ENCODE measurements at regions of chr7 and their contacts with region 1.

Region 1: GRCh38 chr7:36389371-36390198 is at the start of gene ANLN:
- DNase-seq: peak; percentile 96 to 99
- H3K4me3 ChIP-seq: peak within 1 kb of the TSS; percentile 94
- H3K27ac ChIP-seq: peak within 1 kb of the TSS; percentile 81
- H3K4me1 ChIP-seq: peaks cover 70% of the 10 kb centered on the region
- H3K27me3 ChIP-seq: no peaks in the 10 kb centered on the region
- CTCF ChIP-seq: no peak; the same call in 1 of the 2 replicates
- total RNA-seq, gene ANLN: 239 and 262 TPM in 2 replicates

Region 2: GRCh38 chr7:35003679-35004303 is 1385.8 kb before region 1 on chr7:
- CTCF ChIA-PET with region 1: no interaction called
- POLR2A ChIA-PET with region 1: interaction called, 11 read pairs
- intact Hi-C with region 1: no loop called
- DNase-seq: peak; percentile 88 to 99
- H3K4me3 ChIP-seq: peak overlapping the region; percentile 28; the same call in 1 of the 2 replicates
- H3K27ac ChIP-seq: peak overlapping the region; percentile 94
- H3K4me1 ChIP-seq: peaks cover 45% of the 10 kb centered on the region
- H3K27me3 ChIP-seq: no peaks in the 10 kb centered on the region
- CTCF ChIP-seq: no peak

Region 3: GRCh38 chr7:35801392-35802101 is 588.0 kb before region 1 on chr7:
- CTCF ChIA-PET with region 1: no interaction called
- POLR2A ChIA-PET with region 1: interaction called, 3 read pairs
- intact Hi-C with region 1: loop called (anchors 5 kb)
- DNase-seq: peak; percentile 61 to 76
- H3K4me3 ChIP-seq: peak overlapping the region; percentile 69
- H3K27ac ChIP-seq: peak overlapping the region; percentile 92
- H3K4me1 ChIP-seq: peaks cover 31% of the 10 kb centered on the region
- H3K27me3 ChIP-seq: no peaks in the 10 kb centered on the region
- CTCF ChIP-seq: peak; percentile 86

Region 4: DNA sequence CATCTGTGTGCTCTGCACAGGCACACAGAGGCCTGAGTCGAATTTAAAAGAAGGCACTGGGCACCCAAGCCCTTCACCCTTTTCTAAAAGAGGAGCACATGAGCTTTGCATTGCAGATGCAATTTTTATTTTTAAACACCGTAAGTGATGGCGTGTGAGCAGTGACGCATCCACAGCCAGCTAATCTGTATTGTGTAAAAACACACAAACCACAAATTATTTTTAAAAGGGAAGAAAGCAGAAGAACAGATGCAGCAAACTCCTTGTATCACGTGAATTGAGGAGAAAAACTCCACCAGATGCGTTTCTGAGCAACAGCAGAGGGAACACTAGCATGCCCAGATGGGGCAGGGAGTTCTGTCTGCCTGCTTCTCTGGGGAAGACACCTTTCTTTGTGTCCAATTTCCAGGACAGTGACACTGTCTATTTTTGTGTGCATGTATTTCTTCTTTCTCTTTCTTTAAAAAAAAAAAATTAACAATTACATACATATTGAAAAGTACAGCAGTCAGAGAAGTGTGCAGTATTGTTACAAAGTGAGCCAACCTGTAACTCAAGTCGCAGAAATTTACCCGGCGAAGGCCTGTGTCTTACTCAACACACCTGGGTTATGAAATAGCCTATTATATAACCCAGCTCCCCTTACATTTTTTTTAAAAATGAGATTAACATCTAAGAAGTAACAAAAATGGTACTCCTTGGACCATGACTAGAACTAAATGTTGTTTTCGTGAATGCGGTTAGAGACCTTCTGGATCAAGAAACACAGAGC is 197.3 kb before region 1 on chr7:
- CTCF ChIA-PET with region 1: no interaction called
- POLR2A ChIA-PET with region 1: no interaction called
- intact Hi-C with region 1: no loop called
- DNase-seq: no peak
- H3K4me3 ChIP-seq: no peak overlapping the region
- H3K27ac ChIP-seq: no peak overlapping the region
- H3K4me1 ChIP-seq: peaks cover 25% of the 10 kb centered on the region
- H3K27me3 ChIP-seq: no peaks in the 10 kb centered on the region
- CTCF ChIP-seq: no peak

Region 5: GRCh38 chr7:36303202-36304098 is 86.1 kb before region 1 on chr7:
- CTCF ChIA-PET with region 1: no interaction called
- POLR2A ChIA-PET with region 1: no interaction called
- intact Hi-C with region 1: loop called (anchors 1 kb)
- DNase-seq: peak; percentile 94 to 100
- H3K4me3 ChIP-seq: no peak overlapping the region
- H3K27ac ChIP-seq: peak overlapping the region; percentile 60
- H3K4me1 ChIP-seq: peaks cover 29% of the 10 kb centered on the region
- H3K27me3 ChIP-seq: no peaks in the 10 kb centered on the region
- CTCF ChIP-seq: no peak

Region 6: DNA sequence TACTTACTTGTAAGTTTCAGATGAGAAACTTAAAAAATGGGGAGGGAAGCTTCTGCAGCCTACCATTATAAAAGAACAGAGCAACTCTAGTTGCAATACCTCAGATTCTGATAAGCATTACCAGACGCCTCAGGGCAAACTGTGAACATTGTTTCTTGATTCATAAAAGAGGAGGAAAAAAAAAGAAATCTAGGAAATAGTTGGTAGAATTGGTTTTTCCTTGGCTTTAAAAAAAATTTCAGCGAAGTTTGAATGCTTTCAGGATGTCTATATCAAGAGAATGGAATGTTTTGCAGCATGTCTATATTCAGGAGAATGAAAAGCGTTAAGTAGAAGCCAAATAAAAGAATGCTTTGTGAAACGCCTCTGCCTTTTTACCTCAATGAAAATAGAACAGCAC is 17.4 kb before region 1 on chr7:
- CTCF ChIA-PET with region 1: interaction called, 14 read pairs
- POLR2A ChIA-PET with region 1: interaction called, 9 read pairs
- intact Hi-C with region 1: loop called (anchors 1 kb)
- DNase-seq: peak; percentile 61 to 73
- H3K4me3 ChIP-seq: no peak overlapping the region
- H3K27ac ChIP-seq: no peak overlapping the region
- H3K4me1 ChIP-seq: peaks cover 12% of the 10 kb centered on the region
- H3K27me3 ChIP-seq: no peaks in the 10 kb centered on the region
- CTCF ChIP-seq: no peak

Region 7: GRCh38 chr7:36473454-36474282 is 84.1 kb after region 1 on chr7:
- CTCF ChIA-PET with region 1: interaction called, 13 read pairs
- POLR2A ChIA-PET with region 1: no interaction called
- intact Hi-C with region 1: no loop called
- DNase-seq: peak in 1 of 2 experiments; percentile 50
- H3K4me3 ChIP-seq: no peak overlapping the region
- H3K27ac ChIP-seq: no peak overlapping the region
- H3K4me1 ChIP-seq: no peaks in the 10 kb centered on the region
- H3K27me3 ChIP-seq: no peaks in the 10 kb centered on the region; the same call in 1 of the 2 replicates
- CTCF ChIP-seq: peak; percentile 75